ENCODE measurements at regions of chr2 and their contacts with region 1.

Region 1: DNA sequence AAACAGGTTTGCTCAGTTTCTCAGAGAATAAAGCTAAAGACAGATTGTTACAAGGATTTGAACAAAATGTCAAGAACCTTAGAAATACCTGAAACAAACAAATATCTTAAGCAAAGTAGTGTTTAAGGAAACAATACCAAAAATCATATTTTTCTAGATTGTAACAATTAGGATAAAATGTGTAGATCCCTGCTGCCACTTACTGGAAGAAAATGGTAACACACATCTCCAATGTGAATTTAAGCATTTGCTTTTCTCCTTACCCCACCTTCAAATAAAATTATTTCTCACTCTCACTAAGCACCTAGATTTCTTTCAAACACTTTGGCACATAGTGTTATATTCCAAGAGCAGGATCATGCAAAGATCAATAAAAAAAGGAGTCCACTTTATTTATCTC is 34.9 kb downstream of the SUCLG1 start:
- DNase-seq: peak; percentile 26
- H3K4me3 Mint-ChIP-seq: no peak overlapping the region
- H3K27ac Mint-ChIP-seq: no peak overlapping the region
- H3K4me1 Mint-ChIP-seq: peaks cover 13% of the 10 kb centered on the region
- H3K27me3 Mint-ChIP-seq: no peaks in the 10 kb centered on the region
- CTCF ChIP-seq: peak; percentile 63

Region 2: DNA sequence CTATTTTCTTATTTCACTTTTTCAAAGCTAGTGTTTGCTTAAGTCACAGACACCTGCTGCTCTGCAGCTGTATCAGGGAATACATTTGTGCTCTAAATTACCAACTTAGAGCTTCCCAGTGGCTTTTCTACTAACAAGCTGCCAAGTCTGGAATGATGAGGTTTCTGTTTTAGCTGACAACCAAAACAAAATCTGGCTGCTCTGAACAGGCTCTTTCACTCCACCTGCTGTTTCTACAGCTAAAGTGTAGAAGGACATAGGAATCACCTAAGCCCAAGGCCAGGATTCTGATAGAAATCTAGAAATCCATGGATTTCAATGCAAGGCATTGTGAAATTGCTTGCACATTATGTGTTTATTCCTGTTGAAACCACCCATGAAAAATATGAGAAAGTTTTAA is 166.3 kb before region 1 on chr2:
- CTCF ChIA-PET with region 1: no interaction called
- POLR2A ChIA-PET with region 1: no interaction called
- intact Hi-C with region 1: no loop called
- DNase-seq: peak; percentile 46
- H3K4me3 Mint-ChIP-seq: no peak overlapping the region
- H3K27ac Mint-ChIP-seq: no peak overlapping the region
- H3K4me1 Mint-ChIP-seq: no peaks in the 10 kb centered on the region
- H3K27me3 Mint-ChIP-seq: no peaks in the 10 kb centered on the region
- CTCF ChIP-seq: peak; percentile 27

Region 3: GRCh38 chr2:84450288-84451227 is 26.4 kb after region 1 on chr2:
- CTCF ChIA-PET with region 1: interaction called, 4 read pairs
- POLR2A ChIA-PET with region 1: interaction called, 10 read pairs
- intact Hi-C with region 1: no loop called
- DNase-seq: peak; percentile 3
- H3K4me3 Mint-ChIP-seq: no peak overlapping the region
- H3K27ac Mint-ChIP-seq: peak overlapping the region; percentile 57
- H3K4me1 Mint-ChIP-seq: peaks cover 22% of the 10 kb centered on the region
- H3K27me3 Mint-ChIP-seq: no peaks in the 10 kb centered on the region
- CTCF ChIP-seq: no peak

Measured in MCF 10A (cell line).